ENCODE measurements at regions of chr22 and their contacts with region 1.

Region 1: DNA sequence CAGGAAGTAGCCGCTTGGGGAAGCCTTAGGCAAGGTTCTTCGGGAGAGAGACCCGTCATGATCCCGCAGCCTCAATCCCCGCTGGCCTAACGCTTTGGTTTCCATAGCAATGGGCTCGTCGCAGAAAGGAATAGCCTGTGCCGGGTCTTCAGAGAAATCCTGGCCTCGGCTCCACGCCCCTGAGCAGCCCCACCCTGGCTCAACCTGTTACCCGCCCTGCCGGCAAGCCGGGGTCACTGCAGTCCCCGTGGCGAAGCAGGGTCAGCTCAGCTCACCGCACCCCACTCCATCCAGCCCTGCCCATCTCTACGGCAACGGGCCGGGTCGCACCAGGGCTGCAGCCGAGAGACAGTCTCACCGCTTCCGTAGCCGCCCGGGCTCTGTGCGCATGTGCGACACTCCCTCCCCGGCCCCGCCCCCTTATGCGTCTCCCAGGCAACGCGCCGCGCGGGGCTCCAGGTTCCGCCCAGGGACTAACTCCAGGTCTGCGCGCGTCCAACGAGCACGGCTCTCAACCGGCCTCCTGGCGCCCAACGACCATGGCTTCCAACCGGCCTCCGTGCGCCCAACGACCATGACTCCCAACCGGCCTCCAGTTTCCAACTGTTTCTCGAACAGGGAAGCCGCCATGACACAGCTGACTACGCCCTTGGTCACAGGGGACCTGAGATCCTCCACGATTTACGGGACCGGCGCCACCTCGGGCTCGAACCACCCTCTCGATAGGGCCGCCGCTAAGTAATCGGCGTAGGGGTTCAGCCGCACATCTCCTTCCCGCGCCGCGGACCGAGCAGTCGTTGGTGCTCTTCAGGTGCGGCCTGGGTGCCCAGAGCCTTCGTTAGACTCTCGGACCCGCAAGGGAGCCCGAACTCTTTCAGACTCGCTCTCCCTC is at the start of gene DUSP18:
- DNase-seq: peak; percentile 89 to 95 (median 92)
- H3K4me3 ChIP-seq: peak within 1 kb of the TSS; percentile 79 to 84
- H3K4me3 Mint-ChIP-seq: peak within 1 kb of the TSS; percentile 90 to 99 (median 96)
- H3K27ac ChIP-seq: peak within 1 kb of the TSS; percentile 61
- H3K27ac Mint-ChIP-seq: peak within 1 kb of the TSS; percentile 80 to 99 (median 94)
- H3K4me1 ChIP-seq: peaks cover 13% of the 10 kb centered on the region
- H3K4me1 Mint-ChIP-seq: peaks cover 16 to 28% (median 21%) of the 10 kb centered on the region in 4 donors
- H3K27me3 ChIP-seq: no peaks in the 10 kb centered on the region
- H3K27me3 Mint-ChIP-seq: no peaks in the 10 kb centered on the region
- total RNA-seq, gene DUSP18: 16.8 to 16.9 TPM

Region 2: GRCh38 chr22:30591588-30592359 is 76.0 kb before region 1 on chr22 and contains the start of gene PES1:
- CTCF ChIA-PET with region 1: no interaction called
- POLR2A ChIA-PET with region 1: interaction called, 3 read pairs
- intact Hi-C with region 1: loop called (anchors 1 kb)
- DNase-seq: peak; percentile 96 to 98 (median 97)
- H3K4me3 ChIP-seq: peak within 1 kb of the TSS; percentile 50 to 99
- H3K4me3 Mint-ChIP-seq: no peak within 1 kb of the TSS
- H3K27ac ChIP-seq: peak within 1 kb of the TSS; percentile 78
- H3K27ac Mint-ChIP-seq: peak within 1 kb of the TSS in 1 of 7 donors; percentile 82
- H3K4me1 ChIP-seq: peaks cover 22% of the 10 kb centered on the region
- H3K4me1 Mint-ChIP-seq: peaks cover 0 to 10% (median 3%) of the 10 kb centered on the region in 4 donors
- H3K27me3 ChIP-seq: no peaks in the 10 kb centered on the region
- H3K27me3 Mint-ChIP-seq: peaks cover 3 to 7% of the 10 kb centered on the region in 2 donors
- total RNA-seq, gene PES1: 50.1 to 51.6 TPM

Region 3: DNA sequence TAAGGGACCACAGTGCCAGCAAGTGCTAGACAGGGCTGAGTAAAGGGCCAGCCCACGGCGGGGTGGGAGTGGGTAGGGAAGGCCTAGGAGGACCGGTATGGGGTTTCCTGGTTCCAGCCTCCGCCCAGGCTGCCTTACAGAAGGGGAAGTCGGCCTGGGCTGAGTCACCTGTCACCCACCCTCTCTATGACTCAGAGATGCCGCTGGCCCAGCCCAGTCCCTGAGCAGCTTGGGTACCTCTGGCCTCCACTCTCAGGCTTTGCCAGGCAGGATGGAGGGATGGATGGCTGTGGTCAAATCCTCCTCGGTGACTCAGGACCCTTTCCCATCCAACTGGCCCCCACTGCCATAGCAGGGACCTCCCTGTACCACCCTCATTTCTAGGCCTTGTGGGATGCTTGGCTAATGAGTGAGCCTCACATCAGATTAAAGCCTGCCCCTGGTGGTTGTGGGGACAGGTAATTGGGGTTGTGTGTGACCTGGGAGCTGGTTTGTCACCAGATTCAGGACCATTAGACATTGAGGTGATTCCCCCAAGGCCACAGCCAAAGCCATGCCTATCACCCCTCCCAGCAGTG is 18.2 kb before region 1 on chr22:
- CTCF ChIA-PET with region 1: interaction called, 3 read pairs
- POLR2A ChIA-PET with region 1: interaction called, 7 read pairs
- intact Hi-C with region 1: loop called (anchors 1 kb)
- DNase-seq: peak in 4 of 5 donors; percentile 4 to 82 (median 21)
- H3K4me3 ChIP-seq: no peak overlapping the region
- H3K4me3 Mint-ChIP-seq: no peak overlapping the region
- H3K27ac ChIP-seq: no peak overlapping the region
- H3K27ac Mint-ChIP-seq: peak overlapping the region; percentile 41 to 84 (median 73)
- H3K4me1 ChIP-seq: peaks cover 9% of the 10 kb centered on the region
- H3K4me1 Mint-ChIP-seq: peaks cover 4 to 22% (median 10%) of the 10 kb centered on the region in 4 donors
- H3K27me3 ChIP-seq: no peaks in the 10 kb centered on the region
- H3K27me3 Mint-ChIP-seq: no peaks in the 10 kb centered on the region

Region 4: DNA sequence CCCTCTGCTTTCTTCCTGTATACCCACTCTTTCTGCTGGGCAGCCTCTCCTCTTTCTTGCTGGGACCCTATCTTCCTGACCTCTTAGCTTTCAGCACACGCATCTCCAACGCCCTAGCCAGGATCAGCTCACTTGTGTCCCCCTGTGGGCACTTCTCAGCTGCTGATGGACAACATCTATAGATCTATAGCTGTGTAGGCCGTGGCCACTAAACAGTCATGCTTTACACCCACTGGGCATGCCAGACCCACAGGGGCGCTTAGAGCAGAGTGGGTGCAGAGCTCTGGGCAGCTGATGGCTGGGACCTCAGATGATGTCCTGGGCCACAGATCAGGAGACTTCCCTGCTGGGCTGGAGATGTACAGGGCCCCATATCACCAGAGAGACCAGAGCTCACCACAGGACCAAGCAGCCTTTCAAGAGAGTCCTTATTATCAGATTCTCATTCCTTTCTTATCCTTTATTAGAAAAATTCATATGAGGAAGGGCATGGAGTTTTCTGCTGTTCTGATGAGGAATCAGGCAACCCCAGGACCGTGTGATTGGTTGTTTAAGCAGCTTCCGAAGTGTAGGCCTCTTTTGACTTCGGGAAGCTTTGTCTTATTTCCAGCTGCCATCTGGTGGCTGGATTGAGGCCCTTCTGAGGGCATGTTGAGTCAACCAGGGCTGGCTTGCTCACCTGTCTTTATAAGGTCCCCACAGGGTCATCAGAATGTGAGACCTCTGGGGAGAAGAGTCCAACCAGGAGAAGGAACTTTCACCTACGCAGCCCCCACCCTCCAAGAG is 87.4 kb after region 1 on chr22:
- CTCF ChIA-PET with region 1: no interaction called
- POLR2A ChIA-PET with region 1: no interaction called
- intact Hi-C with region 1: loop called (anchors 1 kb)
- DNase-seq: peak in 4 of 5 donors; percentile 22 to 34 (median 25)
- H3K4me3 ChIP-seq: no peak overlapping the region
- H3K4me3 Mint-ChIP-seq: no peak overlapping the region
- H3K27ac ChIP-seq: no peak overlapping the region
- H3K27ac Mint-ChIP-seq: no peak overlapping the region
- H3K4me1 ChIP-seq: no peaks in the 10 kb centered on the region
- H3K4me1 Mint-ChIP-seq: no peaks in the 10 kb centered on the region
- H3K27me3 ChIP-seq: no peaks in the 10 kb centered on the region
- H3K27me3 Mint-ChIP-seq: no peaks in the 10 kb centered on the region